ENCODE measurements at regions of chr11 and their contacts with region 1.

Region 1: GRCh38 chr11:123461164-123461563 is 31.1 kb downstream of the GRAMD1B start:
- DNase-seq: no peak
- H3K4me3 ChIP-seq: no peak overlapping the region
- H3K27ac ChIP-seq: no peak overlapping the region
- H3K4me1 ChIP-seq: peaks cover 12% of the 10 kb centered on the region
- H3K27me3 ChIP-seq: no peaks in the 10 kb centered on the region
- CTCF ChIP-seq: no peak

Region 2: GRCh38 chr11:123360267-123360936 is 100.8 kb before region 1 on chr11:
- CTCF ChIA-PET with region 1: interaction called, 14 read pairs
- POLR2A ChIA-PET with region 1: no interaction called
- intact Hi-C with region 1: no loop called
- DNase-seq: no peak
- H3K4me3 ChIP-seq: no peak overlapping the region
- H3K27ac ChIP-seq: no peak overlapping the region
- H3K4me1 ChIP-seq: no peaks in the 10 kb centered on the region
- H3K27me3 ChIP-seq: peaks cover 50% of the 10 kb centered on the region
- CTCF ChIP-seq: no peak

Measured in PC-9 (cell line).